ENCODE measurements at regions of chr7 and their contacts with region 1.

Region 1: GRCh38 chr7:101138213-101138870 is 11.4 kb downstream of the SERPINE1 start:
- DNase-seq: peak; percentile 85 to 95
- H3K4me3 ChIP-seq: peak overlapping the region; percentile 29
- H3K4me3 Mint-ChIP-seq: peak overlapping the region; percentile 76
- H3K27ac Mint-ChIP-seq: peak overlapping the region; percentile 88
- H3K4me1 ChIP-seq: peaks cover 9% of the 10 kb centered on the region; the same call in 1 of the 2 replicates
- H3K4me1 Mint-ChIP-seq: peaks cover 4% of the 10 kb centered on the region
- H3K27me3 ChIP-seq: no peaks in the 10 kb centered on the region
- H3K27me3 Mint-ChIP-seq: peaks cover 3% of the 10 kb centered on the region
- CTCF ChIP-seq: peak; percentile 86 to 94

Region 2: GRCh38 chr7:101094416-101095375 is 43.6 kb before region 1 on chr7:
- CTCF ChIA-PET with region 1: no interaction called
- POLR2A ChIA-PET with region 1: no interaction called
- intact Hi-C with region 1: loop called (anchors 2 kb)
- DNase-seq: peak in 1 of 2 experiments; percentile 66
- H3K4me3 ChIP-seq: no peak overlapping the region
- H3K4me3 Mint-ChIP-seq: no peak overlapping the region
- H3K27ac Mint-ChIP-seq: no peak overlapping the region
- H3K4me1 ChIP-seq: peaks cover 6% of the 10 kb centered on the region
- H3K4me1 Mint-ChIP-seq: peaks cover 7% of the 10 kb centered on the region
- H3K27me3 ChIP-seq: no peaks in the 10 kb centered on the region
- H3K27me3 Mint-ChIP-seq: no peaks in the 10 kb centered on the region
- CTCF ChIP-seq: peak; percentile 28 to 62

Region 3: DNA sequence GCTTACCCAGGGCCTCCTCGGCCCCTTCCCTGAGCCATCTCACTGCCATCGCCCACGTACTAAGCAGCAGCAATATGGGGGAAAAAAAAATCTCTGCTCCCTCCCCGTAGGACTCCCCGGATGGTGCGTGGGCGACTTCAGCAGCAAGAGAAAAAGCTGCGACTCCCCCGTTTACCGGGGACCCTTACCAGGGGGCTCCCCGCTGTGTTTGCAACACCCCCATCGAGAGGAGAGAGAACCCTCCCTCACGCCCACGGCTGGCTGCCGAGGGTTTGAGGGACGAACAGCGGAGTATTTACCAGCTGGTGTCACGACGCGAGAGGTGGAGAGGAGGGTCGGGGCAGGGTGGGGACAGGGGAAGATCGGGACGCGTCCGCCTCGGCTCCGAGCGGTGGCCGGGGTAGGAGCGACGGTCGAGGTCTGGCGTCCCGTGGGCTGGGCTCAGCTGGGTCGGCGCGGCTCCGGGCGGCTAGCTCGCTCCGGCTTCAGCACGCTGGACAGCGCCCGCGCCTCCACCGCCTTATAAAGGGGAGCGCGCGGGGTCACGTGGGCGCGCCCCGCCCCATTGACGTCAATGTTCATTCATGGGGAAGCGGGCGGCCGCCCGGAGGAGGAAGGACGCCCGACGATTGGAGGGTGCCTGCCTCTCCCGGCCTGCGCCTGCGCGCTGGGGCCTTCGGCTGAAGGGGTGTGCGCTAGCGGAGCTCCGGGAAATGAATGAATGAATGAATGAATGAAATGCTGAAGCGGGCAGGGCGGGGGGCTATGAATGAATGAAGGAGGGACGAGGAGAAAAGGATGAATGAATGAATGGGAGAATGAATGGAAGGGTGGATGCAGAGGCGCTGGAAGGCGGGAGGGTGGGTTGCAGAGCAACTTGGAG is 27.0 kb after region 1 on chr7 and contains the start of gene VGF:
- CTCF ChIA-PET with region 1: interaction called, 26 read pairs
- POLR2A ChIA-PET with region 1: interaction called, 4 read pairs
- intact Hi-C with region 1: no loop called
- DNase-seq: peak; percentile 95 to 96
- H3K4me3 ChIP-seq: peak within 1 kb of the TSS; percentile 63
- H3K4me3 Mint-ChIP-seq: peak within 1 kb of the TSS; percentile 74
- H3K27ac Mint-ChIP-seq: no peak within 1 kb of the TSS
- H3K4me1 ChIP-seq: peaks cover 38% of the 10 kb centered on the region
- H3K4me1 Mint-ChIP-seq: peaks cover 31% of the 10 kb centered on the region
- H3K27me3 ChIP-seq: peaks cover under 1% of the 10 kb centered on the region
- H3K27me3 Mint-ChIP-seq: peaks cover 32% of the 10 kb centered on the region
- CTCF ChIP-seq: no peak
- total RNA-seq, gene VGF: 1.2 and 1.3 TPM in 2 replicates

Region 4: GRCh38 chr7:101244375-101245146 is 106.2 kb after region 1 on chr7 and contains the start of gene FIS1:
- CTCF ChIA-PET with region 1: interaction called, 32 read pairs
- POLR2A ChIA-PET with region 1: no interaction called
- intact Hi-C with region 1: no loop called
- DNase-seq: peak; percentile 94 to 95
- H3K4me3 ChIP-seq: peak within 1 kb of the TSS; percentile 95
- H3K4me3 Mint-ChIP-seq: peak within 1 kb of the TSS; percentile 92
- H3K27ac Mint-ChIP-seq: peak within 1 kb of the TSS; percentile 93
- H3K4me1 ChIP-seq: peaks cover 13% of the 10 kb centered on the region; the same call in 1 of the 2 replicates
- H3K4me1 Mint-ChIP-seq: peaks cover 10% of the 10 kb centered on the region
- H3K27me3 ChIP-seq: no peaks in the 10 kb centered on the region
- H3K27me3 Mint-ChIP-seq: no peaks in the 10 kb centered on the region
- CTCF ChIP-seq: peak; percentile 93 to 95
- total RNA-seq, gene FIS1: 97.9 and 99.9 TPM in 2 replicates